HEK293 (cell line): ENCODE measurements at regions of chr11 and their contacts with region 1.

Region 1: DNA sequence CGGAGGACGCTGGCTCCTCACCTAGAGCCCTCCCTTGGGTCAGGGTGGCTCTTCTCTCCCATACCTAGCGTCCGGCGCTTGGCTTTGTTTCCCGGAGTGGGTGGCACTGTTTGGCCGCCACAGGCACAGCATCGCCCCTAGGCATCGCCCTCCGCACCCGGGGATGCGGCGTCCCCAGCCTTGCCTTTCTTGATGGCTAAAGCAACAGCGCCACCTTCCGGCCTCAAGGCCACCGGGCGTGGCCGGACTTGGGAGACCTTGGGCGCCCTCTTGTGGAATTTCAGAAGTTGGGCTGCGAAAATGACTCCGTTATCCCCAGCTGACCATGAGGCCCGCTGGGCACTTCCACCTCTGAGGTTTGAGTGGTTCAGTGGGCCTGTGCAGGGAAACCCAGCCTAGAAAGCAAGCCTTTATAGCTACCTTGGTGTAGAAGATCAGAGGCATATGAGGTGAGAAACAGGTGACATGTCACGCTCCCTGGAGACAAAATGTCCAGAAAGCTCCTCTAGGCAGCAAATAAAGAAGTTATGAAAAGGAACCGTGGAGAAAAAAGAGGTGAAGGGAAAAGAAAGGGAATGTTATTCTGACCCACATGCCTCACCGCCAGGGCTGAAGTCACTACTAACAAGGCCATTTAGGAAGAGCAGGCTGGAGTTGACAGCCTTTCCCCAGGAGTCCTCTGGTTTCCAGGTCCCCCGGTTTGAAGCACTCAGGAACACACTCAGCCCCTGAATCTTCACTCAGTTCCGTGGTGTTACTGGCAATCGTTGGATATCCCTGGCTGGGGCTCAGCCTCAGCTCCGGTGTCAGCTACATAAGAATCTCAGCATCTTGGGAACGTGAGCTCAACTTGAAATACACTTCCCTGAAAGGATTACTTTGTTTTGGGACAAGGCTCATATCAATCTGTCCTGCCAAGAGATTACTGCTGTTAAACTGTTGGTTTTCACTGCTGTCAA is 54.1 kb downstream of the SNX19 start:
- H3K4me3 ChIP-seq: no peak overlapping the region
- H3K27ac ChIP-seq: no peak overlapping the region
- H3K4me1 ChIP-seq: no peaks in the 10 kb centered on the region
- CTCF ChIP-seq: peak; percentile 96

Region 2: DNA sequence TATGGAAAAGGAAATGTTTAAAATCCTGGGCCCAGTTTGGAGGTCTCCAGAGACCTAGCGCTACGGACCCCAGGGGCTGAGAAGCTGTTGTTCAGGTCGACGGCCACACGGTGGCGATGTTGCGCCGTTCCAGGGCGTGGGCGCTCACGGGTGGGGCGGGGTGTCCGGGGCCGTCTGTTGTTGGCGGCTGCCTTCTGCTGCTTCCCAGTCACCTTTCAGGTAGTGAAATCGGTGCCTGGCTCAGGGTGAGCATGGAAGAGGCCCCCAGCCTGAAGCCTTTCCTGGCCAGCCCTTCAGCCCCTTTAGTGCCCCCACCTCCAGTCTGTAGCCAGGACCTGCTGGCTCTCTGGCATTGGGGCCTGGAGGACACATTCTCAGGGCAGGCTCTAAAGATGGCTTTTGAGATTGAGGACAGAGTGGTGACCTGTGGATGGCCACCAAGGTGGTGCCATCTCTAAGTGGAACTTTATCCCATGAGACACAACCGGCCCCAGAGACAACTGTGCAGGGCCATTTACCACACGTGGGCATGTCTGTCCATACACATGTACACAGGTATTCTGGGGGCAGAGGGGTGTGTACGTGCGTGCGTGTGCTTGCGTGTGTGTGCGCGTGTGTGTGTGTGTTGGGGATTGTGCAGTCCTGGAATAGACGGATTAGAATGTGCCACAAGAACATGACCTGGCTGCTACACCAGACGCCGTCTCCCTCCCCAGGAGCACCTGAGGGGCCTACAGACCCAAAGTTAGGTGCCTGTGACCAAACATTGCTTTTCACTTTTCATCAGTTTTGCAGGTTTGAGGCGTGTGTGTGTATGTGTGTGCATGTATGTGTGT is 648.8 kb before region 1 on chr11:
- CTCF ChIA-PET with region 1: interaction called, 11 read pairs
- POLR2A ChIA-PET with region 1: no interaction called
- H3K4me3 ChIP-seq: no peak overlapping the region
- H3K27ac ChIP-seq: no peak overlapping the region
- H3K4me1 ChIP-seq: no peaks in the 10 kb centered on the region
- CTCF ChIP-seq: peak; percentile 67

Region 3: GRCh38 chr11:130478204-130478701 is 383.9 kb before region 1 on chr11:
- CTCF ChIA-PET with region 1: interaction called, 10 read pairs
- POLR2A ChIA-PET with region 1: no interaction called
- H3K4me3 ChIP-seq: no peak overlapping the region
- H3K27ac ChIP-seq: no peak overlapping the region
- H3K4me1 ChIP-seq: no peaks in the 10 kb centered on the region
- CTCF ChIP-seq: no peak

Region 4: DNA sequence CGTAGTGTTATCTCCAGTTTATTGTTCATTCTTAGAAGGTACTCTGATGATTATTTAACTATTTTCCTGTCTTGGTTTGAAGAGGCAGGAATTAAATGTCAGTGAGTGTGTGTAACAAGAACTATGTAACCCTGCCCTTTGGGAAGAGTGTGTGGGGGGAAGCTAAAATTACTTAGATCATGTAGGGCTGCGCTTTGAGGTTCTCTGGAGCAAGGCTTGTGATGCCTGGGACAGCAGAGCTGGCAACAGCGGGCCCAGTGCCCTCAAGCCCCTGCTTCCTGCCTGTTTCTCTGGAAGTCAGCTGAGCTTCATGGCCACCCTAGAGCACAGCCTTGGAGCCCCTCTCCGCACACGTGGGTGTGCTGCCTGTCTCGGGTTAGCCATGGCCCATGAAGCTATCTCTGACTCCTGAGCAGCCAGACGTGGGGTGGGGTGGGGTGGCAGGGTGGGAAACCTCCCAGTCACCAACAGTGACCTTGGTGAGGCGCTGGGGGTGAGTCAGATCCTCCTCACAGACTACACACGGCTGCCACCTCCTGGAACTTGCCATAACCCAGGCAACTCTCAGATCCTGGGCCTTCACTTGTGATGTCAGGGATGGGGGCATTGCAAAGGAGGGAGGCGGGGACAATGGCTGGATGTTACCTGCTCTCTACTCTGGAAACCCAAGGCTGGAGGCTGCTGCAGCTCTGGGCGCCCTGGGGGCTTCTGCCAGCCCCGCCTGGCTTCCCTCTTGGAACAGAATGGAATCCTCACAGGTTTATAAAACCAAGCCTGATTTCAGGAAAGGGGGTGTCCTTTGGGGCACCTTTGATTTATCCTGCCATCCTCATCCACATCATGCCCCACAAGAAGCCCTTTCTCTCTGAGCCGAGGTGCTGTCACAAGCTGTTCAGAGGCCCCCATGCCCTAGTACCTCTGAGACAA is 34.5 kb before region 1 on chr11:
- CTCF ChIA-PET with region 1: interaction called, 72 read pairs
- POLR2A ChIA-PET with region 1: no interaction called
- H3K4me3 ChIP-seq: no peak overlapping the region
- H3K27ac ChIP-seq: no peak overlapping the region
- H3K4me1 ChIP-seq: no peaks in the 10 kb centered on the region
- CTCF ChIP-seq: peak; percentile 42; the same call in 1 of the 2 replicates

Region 5: DNA sequence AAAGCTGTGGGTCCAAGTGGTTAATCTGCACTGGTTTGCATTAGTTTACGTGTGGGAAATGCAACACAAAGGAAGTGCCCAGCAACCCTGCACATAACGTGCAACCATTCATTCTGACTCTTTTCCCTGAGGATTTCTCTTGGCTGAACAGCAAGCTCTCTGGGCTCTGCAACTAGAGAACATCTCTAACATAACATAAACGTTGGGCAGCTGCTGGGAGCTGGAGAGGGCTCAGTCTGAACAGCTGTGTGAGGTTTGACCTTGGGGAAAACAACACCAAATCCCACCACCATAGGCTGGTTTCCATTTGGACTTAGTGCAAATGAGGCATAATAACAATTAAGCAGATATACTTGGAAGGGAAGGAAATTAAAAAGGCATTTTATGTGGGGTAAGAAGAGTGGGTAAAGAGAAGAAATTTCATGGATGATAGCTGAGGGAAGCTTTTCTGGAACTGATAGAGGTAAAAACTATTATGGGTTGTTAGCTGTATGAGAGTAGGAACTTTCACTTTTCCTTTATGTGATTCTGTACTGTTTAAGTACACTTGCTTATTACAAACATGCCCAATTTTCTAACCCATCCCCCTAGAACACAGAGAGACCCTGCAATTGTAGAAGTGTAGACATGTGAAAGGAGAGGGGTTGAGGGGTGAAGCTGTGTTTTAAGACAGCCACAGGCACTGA is 22.1 kb before region 1 on chr11:
- CTCF ChIA-PET with region 1: interaction called, 18 read pairs
- POLR2A ChIA-PET with region 1: no interaction called
- H3K4me3 ChIP-seq: no peak overlapping the region
- H3K27ac ChIP-seq: no peak overlapping the region
- H3K4me1 ChIP-seq: no peaks in the 10 kb centered on the region
- CTCF ChIP-seq: no peak

Region 6: GRCh38 chr11:130882138-130882551 is 20.0 kb after region 1 on chr11:
- CTCF ChIA-PET with region 1: interaction called, 11 read pairs
- POLR2A ChIA-PET with region 1: no interaction called
- H3K4me3 ChIP-seq: no peak overlapping the region
- H3K27ac ChIP-seq: no peak overlapping the region
- H3K4me1 ChIP-seq: no peaks in the 10 kb centered on the region
- CTCF ChIP-seq: no peak

Region 7: DNA sequence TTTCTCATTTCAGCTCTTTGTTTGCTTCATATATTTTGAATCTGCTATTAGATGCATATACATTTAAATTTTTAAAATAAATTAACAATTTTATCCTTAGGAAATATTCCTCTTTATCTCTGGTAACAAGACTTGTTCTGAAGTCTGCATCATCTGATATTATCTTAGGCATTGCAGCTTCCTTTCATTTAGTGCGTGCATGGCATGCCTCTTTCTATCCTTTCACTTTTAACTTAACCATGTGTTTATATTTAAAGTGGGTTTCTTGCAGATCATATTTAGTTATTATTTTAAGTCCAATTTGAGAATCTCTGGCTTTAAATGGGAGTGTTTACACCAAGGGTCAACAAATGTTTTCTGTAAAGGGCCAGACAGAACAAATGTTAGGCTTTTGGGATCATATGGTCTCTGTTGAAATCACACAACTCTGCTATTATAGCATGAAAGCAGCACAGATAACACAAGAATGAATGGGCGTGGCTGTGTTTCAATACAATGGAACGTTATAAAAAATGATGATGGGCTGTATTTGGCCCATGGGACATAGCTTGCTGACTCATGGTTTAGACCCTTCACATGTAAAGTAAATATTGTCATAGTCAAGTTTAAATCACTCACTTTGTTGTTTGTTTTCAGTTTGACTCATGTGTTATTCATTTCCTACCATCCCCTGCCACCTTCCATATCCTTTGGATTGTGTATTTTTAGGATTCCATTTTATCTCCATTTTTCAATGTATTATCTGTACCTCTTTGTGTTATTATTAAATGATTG is 138.0 kb after region 1 on chr11:
- CTCF ChIA-PET with region 1: no interaction called
- POLR2A ChIA-PET with region 1: no interaction called
- H3K4me3 ChIP-seq: no peak overlapping the region
- H3K27ac ChIP-seq: no peak overlapping the region
- H3K4me1 ChIP-seq: peaks cover 2% of the 10 kb centered on the region; the same call in 1 of the 2 replicates
- CTCF ChIP-seq: no peak